MCF 10A (cell line): ENCODE measurements at regions of chr5 and their contacts with region 1.

Region 1: DNA sequence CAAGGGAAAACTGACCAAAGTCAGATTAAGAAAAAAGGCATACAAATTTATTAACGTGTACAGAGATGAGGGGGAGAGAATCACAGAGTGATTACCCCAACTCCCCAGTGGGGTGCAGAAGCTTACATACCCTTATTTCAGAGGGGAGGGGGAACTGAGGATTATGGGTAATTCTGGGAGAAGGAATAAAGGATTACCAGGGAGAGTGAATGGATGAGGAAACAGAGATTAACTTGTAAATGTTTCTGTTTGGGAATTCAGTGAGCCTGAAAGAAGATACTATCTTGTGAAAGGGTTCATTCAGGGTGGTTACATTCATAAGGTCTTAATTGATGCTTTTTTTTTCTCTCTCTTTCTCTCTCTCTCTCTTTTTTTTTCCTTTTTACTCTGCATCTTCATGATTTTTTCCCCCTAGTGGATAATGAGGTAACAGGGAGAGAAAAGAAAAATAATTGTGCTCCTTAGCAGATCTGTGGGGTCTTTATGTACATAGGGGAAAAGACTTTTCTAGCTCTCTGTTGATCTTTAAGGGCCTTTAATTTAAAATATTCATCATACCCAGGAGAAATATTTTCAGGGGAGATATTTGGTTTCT is 49.4 kb downstream of the TARS1 start:
- DNase-seq: no peak
- H3K4me3 Mint-ChIP-seq: no peak overlapping the region
- H3K27ac Mint-ChIP-seq: no peak overlapping the region
- H3K4me1 Mint-ChIP-seq: no peaks in the 10 kb centered on the region
- H3K27me3 Mint-ChIP-seq: no peaks in the 10 kb centered on the region
- CTCF ChIP-seq: no peak

Region 2: DNA sequence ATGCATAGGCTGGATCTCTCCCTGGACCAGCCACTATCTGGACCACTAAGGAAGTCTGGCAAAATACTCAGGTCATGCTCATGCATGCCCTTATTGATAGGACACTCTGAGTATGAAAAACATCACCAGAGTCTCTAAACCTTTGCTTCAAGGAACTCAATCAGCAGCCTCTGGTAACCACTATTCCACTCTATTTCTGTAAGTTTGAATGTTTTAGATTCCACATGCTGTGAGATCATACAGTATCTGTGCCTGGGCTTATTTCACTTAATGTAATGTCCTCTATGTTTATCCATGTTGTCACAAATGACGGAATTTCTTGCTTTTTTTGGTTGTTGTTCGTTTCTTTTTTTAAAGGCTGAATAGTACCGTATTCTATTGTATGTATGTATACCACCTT is 18.9 kb after region 1 on chr5:
- CTCF ChIA-PET with region 1: interaction called, 3 read pairs
- POLR2A ChIA-PET with region 1: no interaction called
- intact Hi-C with region 1: loop called (anchors 1 kb)
- DNase-seq: no peak
- H3K4me3 Mint-ChIP-seq: no peak overlapping the region
- H3K27ac Mint-ChIP-seq: no peak overlapping the region
- H3K4me1 Mint-ChIP-seq: no peaks in the 10 kb centered on the region
- H3K27me3 Mint-ChIP-seq: no peaks in the 10 kb centered on the region
- CTCF ChIP-seq: no peak

Region 3: DNA sequence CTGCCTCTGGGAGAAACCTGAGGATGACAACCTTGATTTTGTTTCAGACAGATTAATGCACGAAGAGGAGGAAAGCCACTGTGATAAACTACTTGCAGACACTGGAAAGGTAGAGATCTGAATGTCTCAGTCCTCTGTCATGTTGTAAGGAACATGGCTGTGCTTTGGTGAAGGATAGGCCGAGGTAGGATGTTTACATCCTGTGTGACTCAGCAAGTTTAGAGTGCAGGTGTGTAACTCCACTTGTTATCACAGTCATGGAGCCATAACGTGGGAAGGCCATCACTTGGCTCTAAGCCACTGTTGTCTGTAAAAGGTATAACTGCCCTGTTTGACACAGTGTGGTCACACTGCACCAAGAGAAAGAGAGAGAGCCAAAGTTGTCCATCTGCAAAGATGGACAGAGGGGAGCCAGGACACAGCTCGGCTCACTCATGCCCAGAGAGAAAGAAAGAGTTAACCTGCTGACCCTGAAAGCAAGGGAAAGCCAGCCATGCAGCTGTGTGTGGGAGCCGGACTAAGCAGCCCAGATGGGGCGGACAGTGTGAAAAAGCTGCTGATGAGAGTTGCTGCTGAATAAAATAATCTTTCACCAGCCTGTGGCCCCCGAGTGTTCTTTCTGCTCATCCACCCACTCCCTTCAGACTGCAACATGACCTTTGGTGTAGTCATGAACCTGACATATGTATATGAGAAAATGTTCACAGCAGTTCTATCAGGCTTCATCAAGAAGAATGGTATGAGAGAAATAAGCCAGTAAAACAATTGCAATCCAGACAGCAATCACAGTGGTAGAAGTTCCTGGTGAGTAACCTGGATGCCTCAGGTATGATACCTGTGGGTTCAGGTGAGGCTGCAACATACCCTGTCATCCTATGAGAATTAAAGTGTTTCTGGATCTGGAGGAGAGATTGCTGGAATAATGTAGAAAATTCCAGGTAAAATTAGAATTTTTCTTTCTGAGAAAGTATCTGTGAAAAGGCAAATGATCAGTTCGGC is 66.5 kb after region 1 on chr5:
- CTCF ChIA-PET with region 1: no interaction called
- POLR2A ChIA-PET with region 1: no interaction called
- intact Hi-C with region 1: no loop called
- DNase-seq: peak; percentile 5
- H3K4me3 Mint-ChIP-seq: no peak overlapping the region
- H3K27ac Mint-ChIP-seq: no peak overlapping the region
- H3K4me1 Mint-ChIP-seq: no peaks in the 10 kb centered on the region
- H3K27me3 Mint-ChIP-seq: no peaks in the 10 kb centered on the region
- CTCF ChIP-seq: no peak